ENCODE measurements at regions of chr10 and their contacts with region 1.

Region 1: DNA sequence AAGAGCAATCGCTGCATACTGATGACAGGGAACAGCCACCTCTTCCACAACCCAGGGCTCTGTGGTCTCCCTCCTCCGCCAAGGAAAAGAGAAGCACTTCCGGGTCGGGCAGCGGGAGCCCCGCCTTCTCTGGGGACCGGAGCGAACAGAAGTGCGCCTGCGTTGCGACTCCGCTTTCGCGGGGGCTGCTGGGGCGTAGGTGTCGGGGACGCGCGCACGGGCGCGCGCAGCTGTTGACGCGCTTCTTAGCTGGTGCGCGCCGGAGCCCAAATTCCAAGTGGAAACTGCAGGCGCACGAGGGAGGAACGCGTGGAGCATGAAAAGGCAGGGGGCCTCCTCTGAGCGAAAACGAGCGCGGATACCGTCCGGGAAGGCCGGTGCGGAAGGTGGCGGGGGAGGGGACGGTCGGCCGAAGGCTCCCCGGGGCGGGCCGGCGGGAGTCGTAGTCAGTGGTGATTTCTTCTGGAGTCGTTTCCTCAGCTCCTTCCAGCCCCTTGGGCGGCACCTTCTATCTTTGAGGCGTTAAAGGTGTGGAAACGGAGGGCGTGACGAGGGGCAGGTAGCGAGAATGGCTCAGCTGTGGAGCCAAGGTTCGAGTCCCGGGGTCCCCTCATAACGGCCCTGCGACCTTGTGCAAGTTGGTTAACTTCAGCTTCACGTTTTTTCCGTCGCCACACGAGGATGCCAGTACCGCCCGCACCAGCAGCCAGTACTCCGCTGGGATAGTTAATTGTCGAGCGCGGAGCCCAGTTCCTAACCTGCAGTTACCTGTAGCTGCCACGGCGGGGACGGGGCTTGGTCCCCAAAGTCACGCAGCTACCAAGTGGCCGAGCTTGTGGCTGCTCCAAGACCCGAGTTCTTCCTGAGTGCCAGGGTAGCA is at the starts of genes COX15 and CUTC:
- DNase-seq: peak; percentile 97
- ATAC-seq: peak; percentile 94
- H3K4me3 Mint-ChIP-seq: peak within 1 kb of the TSS; percentile 93
- H3K27ac Mint-ChIP-seq: peak within 1 kb of the TSS; percentile 98
- H3K4me1 Mint-ChIP-seq: peaks cover 32% of the 10 kb centered on the region
- H3K27me3 Mint-ChIP-seq: no peaks in the 10 kb centered on the region
- total RNA-seq, gene COX15: 28.1 to 35.5 TPM
- total RNA-seq, gene CUTC: 24.6 to 35.8 TPM

Region 2: DNA sequence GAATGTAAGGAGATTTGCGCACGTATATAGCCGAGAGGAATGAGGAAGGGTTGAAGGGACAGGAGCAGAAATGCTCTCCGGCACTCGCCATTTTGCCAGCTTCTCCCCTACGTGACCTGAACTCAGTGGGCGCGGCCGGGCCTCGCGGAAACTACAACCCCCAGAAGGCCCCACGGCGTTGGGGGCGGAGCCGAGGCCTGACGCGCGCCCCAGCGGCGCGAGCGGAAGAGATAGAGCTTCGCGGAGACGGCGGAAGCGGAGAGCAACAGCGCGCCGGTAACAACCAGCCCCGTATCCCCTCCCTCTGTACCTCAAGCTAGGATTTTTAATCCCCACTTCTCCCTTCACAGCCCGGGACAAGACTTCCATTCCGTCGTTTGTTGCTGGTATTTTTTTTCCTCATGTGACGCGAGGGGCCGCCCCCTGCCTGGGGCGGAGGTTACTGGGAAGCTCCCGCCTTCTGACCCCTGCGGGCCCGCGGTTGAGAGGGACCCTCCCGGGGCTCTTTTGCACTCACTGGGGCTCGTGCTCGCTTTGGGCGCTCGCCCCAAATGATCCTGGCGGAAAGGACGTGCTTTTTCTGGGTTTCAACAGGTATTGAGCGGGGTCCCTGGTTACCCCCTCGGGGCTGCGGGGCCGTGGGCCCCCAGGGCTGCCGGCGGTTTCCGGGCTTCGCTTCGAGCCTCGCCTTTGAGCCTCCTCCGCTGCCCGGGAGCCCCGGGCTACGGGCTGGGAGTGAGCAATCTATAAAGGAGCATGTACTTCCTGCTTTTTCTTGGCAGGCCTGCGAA is 1597.6 kb before region 1 on chr10 and contains the start of gene R3HCC1L:
- CTCF ChIA-PET with region 1: no interaction called
- POLR2A ChIA-PET with region 1: interaction called, 3 read pairs
- intact Hi-C with region 1: loop called in 1 of 2 experiments (anchors 1 kb)
- DNase-seq: peak; percentile 97
- ATAC-seq: peak; percentile 95
- H3K4me3 Mint-ChIP-seq: peak within 1 kb of the TSS; percentile 86
- H3K27ac Mint-ChIP-seq: peak within 1 kb of the TSS; percentile 93
- H3K4me1 Mint-ChIP-seq: peaks cover 44% of the 10 kb centered on the region
- H3K27me3 Mint-ChIP-seq: no peaks in the 10 kb centered on the region
- total RNA-seq, gene R3HCC1L: 13.5 to 16.8 TPM

Region 3: DNA sequence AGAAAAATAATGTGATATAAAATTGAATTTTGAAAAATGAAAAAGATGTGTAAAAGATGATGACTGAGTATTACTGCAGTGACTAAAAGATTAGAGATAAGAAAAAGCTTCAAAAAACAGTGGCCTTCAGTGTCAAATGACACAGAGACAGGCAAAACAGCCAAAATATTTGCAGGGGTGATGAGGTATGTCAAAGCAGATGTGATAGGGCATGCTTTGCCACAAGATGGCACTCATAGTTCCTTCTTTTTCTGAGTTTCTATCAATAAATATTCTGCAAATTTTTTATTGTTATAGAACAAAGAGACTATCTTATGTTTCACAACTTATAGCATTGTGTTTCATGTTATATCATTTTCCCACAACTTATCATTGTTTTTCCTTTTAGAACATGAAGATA is 941.5 kb before region 1 on chr10:
- CTCF ChIA-PET with region 1: no interaction called
- POLR2A ChIA-PET with region 1: no interaction called
- intact Hi-C with region 1: no loop called
- DNase-seq: no peak
- ATAC-seq: no peak
- H3K4me3 Mint-ChIP-seq: no peak overlapping the region
- H3K27ac Mint-ChIP-seq: no peak overlapping the region
- H3K4me1 Mint-ChIP-seq: no peaks in the 10 kb centered on the region
- H3K27me3 Mint-ChIP-seq: peaks cover 2% of the 10 kb centered on the region

Region 4: DNA sequence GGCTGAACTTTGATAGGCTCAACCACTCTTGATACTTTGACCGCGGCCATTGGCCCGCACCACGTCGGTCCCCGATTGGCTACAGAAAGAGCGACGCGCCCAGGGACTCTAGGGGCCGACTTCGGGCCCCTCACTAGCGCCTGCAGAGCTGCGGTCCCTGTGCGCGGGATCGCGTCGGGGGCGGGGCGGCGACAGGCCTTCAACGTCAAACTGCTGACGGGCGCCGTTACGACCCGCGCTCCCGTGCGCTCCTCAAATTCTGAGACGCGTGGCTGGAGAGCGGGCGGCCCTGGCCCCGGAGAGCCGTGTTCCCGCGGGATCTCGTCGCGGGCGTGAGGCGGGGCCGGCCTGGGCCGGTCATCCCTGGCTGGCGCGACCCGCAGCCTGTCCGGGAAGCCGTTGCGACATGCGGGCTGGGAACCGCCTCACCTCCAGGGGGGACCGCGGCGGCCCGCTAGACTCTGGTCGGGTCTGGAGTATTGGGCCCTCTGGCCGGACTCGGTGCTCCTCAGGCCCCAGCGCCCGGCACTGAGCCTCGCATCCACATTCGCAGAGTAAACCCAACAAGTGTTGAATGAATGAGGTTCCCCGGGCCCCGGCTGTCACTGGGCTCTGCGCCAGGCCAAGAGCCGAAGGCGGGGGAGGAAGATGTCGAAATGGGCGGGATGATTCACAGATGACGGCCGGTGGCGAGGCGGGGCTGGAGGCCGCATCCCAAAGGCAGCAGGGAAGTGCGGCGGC is 111.4 kb before region 1 on chr10:
- CTCF ChIA-PET with region 1: interaction called, 3 read pairs
- POLR2A ChIA-PET with region 1: interaction called, 5 read pairs
- intact Hi-C with region 1: loop called (anchors 1 kb)
- DNase-seq: peak; percentile 94
- ATAC-seq: peak; percentile 89
- H3K4me3 Mint-ChIP-seq: peak overlapping the region; percentile 96
- H3K27ac Mint-ChIP-seq: peak overlapping the region; percentile 96
- H3K4me1 Mint-ChIP-seq: peaks cover 39% of the 10 kb centered on the region
- H3K27me3 Mint-ChIP-seq: no peaks in the 10 kb centered on the region

Region 5: DNA sequence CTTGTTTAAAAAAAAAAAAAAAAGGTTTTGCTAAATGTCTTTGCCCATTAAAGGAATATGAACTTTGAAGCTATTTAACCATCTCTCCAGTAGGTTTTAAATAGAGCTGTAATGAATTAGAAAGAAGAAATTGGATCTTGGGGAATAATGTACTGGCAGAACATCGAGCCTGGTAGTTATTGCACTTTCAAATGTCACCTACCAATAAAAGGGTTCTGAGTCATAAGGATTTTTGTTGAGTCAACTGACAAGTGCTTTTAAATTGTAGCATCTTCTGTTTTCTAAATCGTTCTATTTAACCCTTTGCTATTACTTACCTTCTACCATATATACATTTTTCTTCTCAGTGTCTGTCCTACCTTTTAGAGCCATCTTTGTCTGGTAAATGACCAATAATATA is 10.4 kb after region 1 on chr10:
- CTCF ChIA-PET with region 1: interaction called, 11 read pairs
- POLR2A ChIA-PET with region 1: no interaction called
- intact Hi-C with region 1: loop called in 1 of 2 experiments (anchors 1 kb)
- DNase-seq: no peak
- ATAC-seq: no peak
- H3K4me3 Mint-ChIP-seq: no peak overlapping the region
- H3K27ac Mint-ChIP-seq: no peak overlapping the region
- H3K4me1 Mint-ChIP-seq: peaks cover 25% of the 10 kb centered on the region
- H3K27me3 Mint-ChIP-seq: no peaks in the 10 kb centered on the region

Region 6: GRCh38 chr10:100185364-100186252 is 453.3 kb after region 1 on chr10 and contains the start of gene ERLIN1:
- CTCF ChIA-PET with region 1: no interaction called
- POLR2A ChIA-PET with region 1: no interaction called
- intact Hi-C with region 1: loop called in 1 of 2 experiments (anchors 1 kb)
- DNase-seq: peak; percentile 97
- ATAC-seq: peak; percentile 90
- H3K4me3 Mint-ChIP-seq: peak within 1 kb of the TSS; percentile 97
- H3K27ac Mint-ChIP-seq: peak within 1 kb of the TSS; percentile 97
- H3K4me1 Mint-ChIP-seq: peaks cover 48% of the 10 kb centered on the region
- H3K27me3 Mint-ChIP-seq: no peaks in the 10 kb centered on the region
- total RNA-seq, gene ERLIN1: 15.2 to 18.7 TPM

Region 7: GRCh38 chr10:100267237-100268104 is 535.2 kb after region 1 on chr10 and contains the start of gene CWF19L1:
- CTCF ChIA-PET with region 1: no interaction called
- POLR2A ChIA-PET with region 1: no interaction called
- intact Hi-C with region 1: loop called in 1 of 2 experiments (anchors 5 kb)
- DNase-seq: peak; percentile 86
- ATAC-seq: peak; percentile 92
- H3K4me3 Mint-ChIP-seq: peak within 1 kb of the TSS; percentile 97
- H3K27ac Mint-ChIP-seq: peak within 1 kb of the TSS; percentile 99
- H3K4me1 Mint-ChIP-seq: peaks cover 22% of the 10 kb centered on the region
- H3K27me3 Mint-ChIP-seq: no peaks in the 10 kb centered on the region
- total RNA-seq, gene CWF19L1: 43.4 to 47.5 TPM

Region 8: GRCh38 chr10:100391163-100392002 is 659.1 kb after region 1 on chr10:
- CTCF ChIA-PET with region 1: no interaction called
- POLR2A ChIA-PET with region 1: no interaction called
- intact Hi-C with region 1: no loop called
- DNase-seq: peak; percentile 25
- ATAC-seq: peak; percentile 80
- H3K4me3 Mint-ChIP-seq: no peak overlapping the region
- H3K27ac Mint-ChIP-seq: no peak overlapping the region
- H3K4me1 Mint-ChIP-seq: peaks cover 10% of the 10 kb centered on the region
- H3K27me3 Mint-ChIP-seq: no peaks in the 10 kb centered on the region

Region 9: GRCh38 chr10:100535715-100536353 is 803.6 kb after region 1 on chr10 and contains the start of gene HIF1AN:
- CTCF ChIA-PET with region 1: no interaction called
- POLR2A ChIA-PET with region 1: no interaction called
- intact Hi-C with region 1: loop called in 1 of 2 experiments (anchors 1 kb)
- DNase-seq: peak; percentile 93
- ATAC-seq: peak; percentile 96
- H3K4me3 Mint-ChIP-seq: no peak within 1 kb of the TSS
- H3K27ac Mint-ChIP-seq: no peak within 1 kb of the TSS
- H3K4me1 Mint-ChIP-seq: peaks cover 27% of the 10 kb centered on the region
- H3K27me3 Mint-ChIP-seq: no peaks in the 10 kb centered on the region
- total RNA-seq, gene HIF1AN: 45.9 to 50.8 TPM

Region 10: DNA sequence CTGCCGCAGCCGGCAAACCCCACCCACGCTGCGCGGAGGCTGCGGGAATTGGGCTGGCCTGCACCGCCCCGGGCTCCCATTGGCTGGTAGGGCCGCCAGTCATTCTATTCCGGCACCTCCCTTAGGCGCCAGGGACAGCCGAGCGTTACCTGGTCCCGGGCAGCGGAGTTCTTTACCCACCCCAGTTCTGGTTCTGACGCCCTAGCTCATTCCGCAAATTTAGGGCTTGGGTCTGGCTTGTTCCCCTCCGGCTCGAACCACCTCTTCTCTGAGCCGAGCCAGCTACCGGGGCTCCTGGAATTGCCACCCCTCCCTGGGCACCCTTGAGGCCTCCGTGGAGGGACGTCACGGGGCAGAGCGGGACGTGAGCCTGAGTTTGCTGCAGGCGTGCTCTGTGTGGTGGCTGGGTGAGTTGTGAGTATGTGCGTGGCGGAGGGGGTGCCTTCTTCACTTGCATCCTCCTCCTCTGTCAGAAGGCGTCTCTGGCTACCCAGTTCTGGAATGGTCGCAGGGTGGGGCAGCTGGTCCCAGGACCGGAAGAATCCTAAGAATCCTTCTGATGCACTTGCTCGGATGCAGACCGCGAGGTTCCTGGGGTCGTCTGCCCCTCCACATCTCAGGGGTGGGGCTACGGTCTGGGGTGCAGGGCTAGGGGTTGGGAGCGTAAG is 1299.0 kb after region 1 on chr10 and contains the starts of genes PDZD7 and SFXN3:
- CTCF ChIA-PET with region 1: no interaction called
- POLR2A ChIA-PET with region 1: no interaction called
- intact Hi-C with region 1: no loop called
- DNase-seq: peak; percentile 98
- ATAC-seq: peak; percentile 85
- H3K4me3 Mint-ChIP-seq: peak within 1 kb of the TSS; percentile 80
- H3K27ac Mint-ChIP-seq: peak within 1 kb of the TSS; percentile 82
- H3K4me1 Mint-ChIP-seq: peaks cover 22% of the 10 kb centered on the region
- H3K27me3 Mint-ChIP-seq: no peaks in the 10 kb centered on the region
- total RNA-seq, gene PDZD7: 0.28 to 0.32 TPM
- total RNA-seq, gene SFXN3: 30.0 to 37.7 TPM